BJ (cell line): ENCODE measurements at regions of chr1 and their contacts with region 1.

Region 1: GRCh38 chr1:44799770-44800584 is at the start of gene PLK3:
- DNase-seq: peak; percentile 85
- H3K4me3 ChIP-seq: peak within 1 kb of the TSS; percentile 77
- H3K27me3 ChIP-seq: no peaks in the 10 kb centered on the region
- CTCF ChIP-seq: peak; percentile 99
- polyA plus RNA-seq, gene PLK3: 25.9 and 45.9 TPM in 2 replicates

Region 2: DNA sequence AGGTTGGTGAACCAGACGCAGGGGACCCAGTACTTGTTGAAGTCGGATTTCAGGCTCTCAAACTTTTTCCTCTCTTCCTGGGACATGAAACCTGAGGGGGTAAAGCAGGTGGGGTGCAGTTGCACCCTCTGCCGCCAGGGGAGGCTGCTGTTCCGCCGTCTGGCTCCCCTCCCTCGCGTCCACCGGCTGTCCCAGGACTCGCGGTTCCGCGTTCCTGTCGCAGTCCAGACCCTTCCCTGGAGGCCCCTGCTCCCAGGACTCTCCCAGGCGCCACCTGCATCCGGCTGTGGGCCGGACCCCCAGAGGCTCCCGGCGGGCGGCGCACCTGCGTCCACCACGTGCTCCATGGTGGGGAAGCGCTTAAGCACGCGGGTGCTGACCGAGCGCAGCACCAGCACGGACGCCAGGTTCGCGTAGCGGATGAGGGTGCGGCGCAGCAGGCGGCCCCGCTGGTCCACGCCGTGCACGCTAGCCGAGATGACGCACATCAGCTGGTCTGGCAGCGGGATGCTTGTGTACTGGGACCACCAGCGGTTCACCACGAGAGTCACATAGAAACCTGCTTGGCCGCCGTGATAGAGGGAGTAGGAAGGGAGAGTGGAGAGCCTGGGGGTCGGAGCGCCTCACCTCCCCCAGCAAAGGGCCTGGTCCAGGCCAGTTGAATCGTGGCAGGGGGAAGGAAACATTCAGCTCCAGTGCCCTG is 13.7 kb before region 1 on chr1:
- CTCF ChIA-PET with region 1: interaction called, 11 read pairs
- POLR2A ChIA-PET with region 1: interaction called, 12 read pairs
- DNase-seq: no peak
- H3K4me3 ChIP-seq: peak overlapping the region; percentile 37
- H3K27me3 ChIP-seq: peaks cover 1% of the 10 kb centered on the region; the same call in 1 of the 2 replicates
- CTCF ChIP-seq: peak; percentile 100

Region 3: GRCh38 chr1:44812822-44813543 is 13.0 kb after region 1 on chr1:
- CTCF ChIA-PET with region 1: interaction called, 15 read pairs
- POLR2A ChIA-PET with region 1: interaction called, 3 read pairs
- DNase-seq: no peak
- H3K4me3 ChIP-seq: peak overlapping the region; percentile 6
- H3K27me3 ChIP-seq: no peaks in the 10 kb centered on the region
- CTCF ChIP-seq: no peak

Region 4: GRCh38 chr1:44819608-44820327 is 19.8 kb after region 1 on chr1:
- CTCF ChIA-PET with region 1: interaction called, 10 read pairs
- POLR2A ChIA-PET with region 1: interaction called, 12 read pairs
- DNase-seq: peak; percentile 79
- H3K4me3 ChIP-seq: peak overlapping the region; percentile 38
- H3K27me3 ChIP-seq: no peaks in the 10 kb centered on the region
- CTCF ChIP-seq: no peak